ENCODE measurements at regions of chr5 and their contacts with region 1.

Region 1: DNA sequence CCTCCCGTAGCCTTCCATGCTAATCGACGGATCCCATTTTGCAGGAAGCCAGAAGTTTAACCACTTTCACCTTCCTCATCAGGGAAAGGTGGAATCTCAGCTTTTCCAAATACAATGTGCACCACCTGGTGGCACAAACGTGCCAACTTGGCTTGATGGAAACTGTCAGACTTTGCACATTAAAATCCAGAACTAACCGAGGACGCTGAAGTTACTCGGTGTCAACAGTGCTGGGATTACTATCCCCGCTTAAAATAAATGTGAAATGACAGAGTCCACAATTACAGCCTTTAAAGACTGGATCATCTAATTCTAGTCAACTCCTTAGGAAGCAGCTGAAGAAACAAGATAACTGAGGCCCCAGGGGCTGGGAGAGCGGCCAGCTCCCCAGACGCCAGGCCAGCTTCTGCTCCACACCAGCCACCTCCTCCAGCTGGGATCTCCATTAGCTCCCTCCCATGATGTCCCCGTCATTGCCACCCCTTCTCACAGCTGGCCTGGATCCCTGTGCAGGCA is 50.1 kb upstream of the RETREG1 start:
- DNase-seq: peak; percentile 7
- ATAC-seq: peak; percentile 58
- H3K4me3 ChIP-seq: no peak overlapping the region
- H3K27ac ChIP-seq: no peak overlapping the region
- H3K4me1 ChIP-seq: no peaks in the 10 kb centered on the region
- H3K27me3 ChIP-seq: no peaks in the 10 kb centered on the region
- CTCF ChIP-seq: peak; percentile 45
- EP300 ChIP-seq: no peak
- POLR2A ChIP-seq: no peak
- RAD21 ChIP-seq: no peak

Region 2: GRCh38 chr5:16489322-16489791 is 177.6 kb before region 1 on chr5:
- CTCF ChIA-PET with region 1: no interaction called
- POLR2A ChIA-PET with region 1: no interaction called
- in situ Hi-C with region 1: loop called (anchors 10 kb)
- intact Hi-C with region 1: no loop called
- DNase-seq: peak; percentile 30
- ATAC-seq: peak; percentile 86
- H3K4me3 ChIP-seq: no peak overlapping the region
- H3K27ac ChIP-seq: no peak overlapping the region
- H3K4me1 ChIP-seq: no peaks in the 10 kb centered on the region
- H3K27me3 ChIP-seq: no peaks in the 10 kb centered on the region; a peak in 1 of 5 replicates
- CTCF ChIP-seq: peak; percentile 60
- EP300 ChIP-seq: no peak
- POLR2A ChIP-seq: no peak
- RAD21 ChIP-seq: peak; percentile 38

Region 3: GRCh38 chr5:16736158-16736995 is 69.4 kb after region 1 on chr5:
- CTCF ChIA-PET with region 1: no interaction called
- POLR2A ChIA-PET with region 1: no interaction called
- in situ Hi-C with region 1: no loop called
- intact Hi-C with region 1: no loop called
- DNase-seq: peak; percentile 94
- ATAC-seq: peak; percentile 92
- H3K4me3 ChIP-seq: peak overlapping the region; percentile 73 to 91 (median 76)
- H3K27ac ChIP-seq: peak overlapping the region; percentile 97
- H3K4me1 ChIP-seq: peaks cover 40% of the 10 kb centered on the region
- H3K27me3 ChIP-seq: no peaks in the 10 kb centered on the region; a peak in 2 of 5 replicates
- CTCF ChIP-seq: no peak
- EP300 ChIP-seq: peak in 1 of 2 experiments; percentile 83; a peak in 2 of 4 replicates
- POLR2A ChIP-seq: peak; percentile 78 to 92
- RAD21 ChIP-seq: peak; percentile 29; the same call in 1 of the 2 replicates

Region 4: GRCh38 chr5:17157916-17158529 is 491.1 kb after region 1 on chr5:
- CTCF ChIA-PET with region 1: no interaction called
- POLR2A ChIA-PET with region 1: no interaction called
- in situ Hi-C with region 1: no loop called
- intact Hi-C with region 1: no loop called
- DNase-seq: no peak
- ATAC-seq: no peak; the same call in 2 of the 3 replicates
- H3K4me3 ChIP-seq: no peak overlapping the region
- H3K27ac ChIP-seq: no peak overlapping the region
- H3K4me1 ChIP-seq: no peaks in the 10 kb centered on the region
- H3K27me3 ChIP-seq: no peaks in the 10 kb centered on the region
- CTCF ChIP-seq: no peak
- EP300 ChIP-seq: no peak
- POLR2A ChIP-seq: no peak
- RAD21 ChIP-seq: no peak

Measured in HepG2 (cell line).